CD4-positive, alpha-beta memory T cell (primary cell): ENCODE measurements at regions of chr17 and their contacts with region 1.

Region 1: GRCh38 chr17:74379495-74380085 is 12.3 kb downstream of the GPR142 start:
- DNase-seq: peak; percentile 84 to 88 (median 87)
- H3K4me3 ChIP-seq: no peak overlapping the region
- H3K4me3 Mint-ChIP-seq: peak overlapping the region in 1 of 8 donors; percentile 13
- H3K27ac ChIP-seq: no peak overlapping the region
- H3K27ac Mint-ChIP-seq: no peak overlapping the region
- H3K4me1 ChIP-seq: peaks cover 9% of the 10 kb centered on the region
- H3K4me1 Mint-ChIP-seq: peaks cover 0 to 8% (median under 1%) of the 10 kb centered on the region in 4 donors
- H3K27me3 ChIP-seq: no peaks in the 10 kb centered on the region
- H3K27me3 Mint-ChIP-seq: peaks cover 2 to 4% of the 10 kb centered on the region in 2 donors

Region 2: DNA sequence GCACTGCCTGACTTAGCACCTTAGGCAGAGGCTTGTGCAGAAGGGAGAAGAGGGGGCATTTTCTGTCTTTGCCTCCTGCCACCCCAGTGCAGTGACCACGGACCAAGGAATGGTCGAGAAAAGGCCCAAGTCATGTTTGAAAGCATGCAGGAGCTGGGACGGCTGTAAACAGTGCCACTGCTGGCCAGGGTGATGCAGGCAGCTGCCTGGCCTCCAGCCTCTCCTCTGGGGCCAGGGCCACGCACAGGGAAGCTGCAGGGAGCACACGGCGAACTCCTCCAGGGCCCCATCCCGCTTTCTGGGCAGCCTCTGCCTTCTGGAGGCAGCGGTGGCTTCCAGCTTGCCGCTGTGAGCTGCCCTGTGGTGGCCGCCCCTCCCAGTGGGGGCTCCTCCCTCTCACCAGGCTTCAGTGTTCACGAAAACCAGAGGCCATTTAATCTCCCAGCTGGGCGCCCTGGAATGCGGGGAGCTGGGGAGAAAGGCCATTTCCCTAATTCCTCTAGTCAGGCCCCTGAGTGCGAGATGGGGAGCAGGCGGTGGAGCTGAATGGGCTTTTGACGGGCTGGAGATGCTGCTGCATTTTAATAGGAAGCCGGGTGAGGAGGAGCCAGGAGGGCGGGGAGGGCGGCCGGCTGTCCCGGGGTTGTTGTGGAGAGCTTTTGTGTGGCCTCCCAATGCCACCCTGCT is 134.3 kb before region 1 on chr17:
- CTCF ChIA-PET with region 1: no interaction called
- POLR2A ChIA-PET with region 1: no interaction called
- intact Hi-C with region 1: no loop called
- DNase-seq: no peak
- H3K4me3 ChIP-seq: no peak overlapping the region
- H3K4me3 Mint-ChIP-seq: no peak overlapping the region
- H3K27ac ChIP-seq: no peak overlapping the region
- H3K27ac Mint-ChIP-seq: no peak overlapping the region
- H3K4me1 ChIP-seq: no peaks in the 10 kb centered on the region
- H3K4me1 Mint-ChIP-seq: peaks cover 0 to 10% (median 2%) of the 10 kb centered on the region in 4 donors
- H3K27me3 ChIP-seq: no peaks in the 10 kb centered on the region
- H3K27me3 Mint-ChIP-seq: no peaks in the 10 kb centered on the region

Region 3: GRCh38 chr17:74314877-74315276 is 64.7 kb before region 1 on chr17:
- CTCF ChIA-PET with region 1: no interaction called
- POLR2A ChIA-PET with region 1: no interaction called
- intact Hi-C with region 1: no loop called
- DNase-seq: no peak
- H3K4me3 ChIP-seq: no peak overlapping the region
- H3K4me3 Mint-ChIP-seq: no peak overlapping the region
- H3K27ac ChIP-seq: no peak overlapping the region
- H3K27ac Mint-ChIP-seq: no peak overlapping the region
- H3K4me1 ChIP-seq: no peaks in the 10 kb centered on the region
- H3K4me1 Mint-ChIP-seq: no peaks in the 10 kb centered on the region
- H3K27me3 ChIP-seq: no peaks in the 10 kb centered on the region
- H3K27me3 Mint-ChIP-seq: no peaks in the 10 kb centered on the region

Region 4: DNA sequence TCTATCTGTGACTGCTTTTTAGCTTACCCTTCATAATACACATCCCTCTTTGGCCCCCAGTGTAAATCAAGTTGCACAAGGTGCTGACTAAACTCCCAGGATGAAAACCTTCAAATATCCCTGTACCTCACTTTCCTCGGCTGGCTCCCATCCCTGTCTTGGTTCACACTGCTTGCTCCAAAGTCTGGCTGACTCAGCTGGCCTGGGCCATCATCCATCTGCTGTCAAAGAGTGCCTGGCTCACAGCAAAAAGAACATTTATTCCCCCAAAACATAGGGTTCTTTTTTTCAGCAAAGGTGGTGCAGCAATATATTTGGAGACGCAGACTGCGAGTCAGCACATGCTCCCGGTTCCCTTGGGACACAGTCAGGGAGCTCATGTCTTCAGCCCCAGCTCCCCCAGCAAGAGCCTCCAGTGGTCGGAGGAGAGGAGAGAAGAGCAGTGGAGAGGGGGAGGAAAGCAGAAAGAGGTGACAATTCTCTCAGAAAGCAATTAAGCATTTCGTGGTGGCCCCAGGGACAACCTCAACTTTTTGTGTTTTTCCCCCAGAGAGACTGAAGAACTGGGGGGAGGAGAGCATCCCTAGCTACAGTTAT is 13.9 kb after region 1 on chr17:
- CTCF ChIA-PET with region 1: interaction called, 10 read pairs
- POLR2A ChIA-PET with region 1: no interaction called
- intact Hi-C with region 1: no loop called
- DNase-seq: no peak
- H3K4me3 ChIP-seq: no peak overlapping the region
- H3K4me3 Mint-ChIP-seq: no peak overlapping the region
- H3K27ac ChIP-seq: no peak overlapping the region
- H3K27ac Mint-ChIP-seq: no peak overlapping the region
- H3K4me1 ChIP-seq: no peaks in the 10 kb centered on the region
- H3K4me1 Mint-ChIP-seq: no peaks in the 10 kb centered on the region
- H3K27me3 ChIP-seq: no peaks in the 10 kb centered on the region
- H3K27me3 Mint-ChIP-seq: peaks cover 0 to 4% of the 10 kb centered on the region in 2 donors

Region 5: GRCh38 chr17:74493381-74493833 is 113.8 kb after region 1 on chr17:
- CTCF ChIA-PET with region 1: interaction called, 65 read pairs
- POLR2A ChIA-PET with region 1: no interaction called
- intact Hi-C with region 1: no loop called
- DNase-seq: peak; percentile 58 to 71 (median 65)
- H3K4me3 ChIP-seq: no peak overlapping the region
- H3K4me3 Mint-ChIP-seq: no peak overlapping the region
- H3K27ac ChIP-seq: no peak overlapping the region
- H3K27ac Mint-ChIP-seq: peak overlapping the region in 3 of 7 donors; percentile 12 to 70 (median 43)
- H3K4me1 ChIP-seq: peaks cover 5% of the 10 kb centered on the region
- H3K4me1 Mint-ChIP-seq: peaks cover 9 to 18% (median 12%) of the 10 kb centered on the region in 4 donors
- H3K27me3 ChIP-seq: no peaks in the 10 kb centered on the region
- H3K27me3 Mint-ChIP-seq: peaks cover 0 to 2% of the 10 kb centered on the region in 2 donors